ENCODE measurements at regions of chr16 and their contacts with region 1.

Region 1: GRCh38 chr16:70589998-70590471 is 56.3 kb upstream of the IL34 start:
- DNase-seq: peak; percentile 19
- H3K4me3 ChIP-seq: no peak overlapping the region
- H3K27ac ChIP-seq: no peak overlapping the region
- H3K4me1 ChIP-seq: peaks cover 9% of the 10 kb centered on the region
- H3K27me3 ChIP-seq: no peaks in the 10 kb centered on the region
- CTCF ChIP-seq: no peak
- POLR2A ChIP-seq: no peak

Region 2: GRCh38 chr16:70601576-70602575 is 11.8 kb after region 1 on chr16:
- CTCF ChIA-PET with region 1: interaction called, 10 read pairs
- POLR2A ChIA-PET with region 1: no interaction called
- dilution Hi-C with region 1: no loop called
- intact Hi-C with region 1: no loop called
- DNase-seq: no peak
- H3K4me3 ChIP-seq: no peak overlapping the region
- H3K27ac ChIP-seq: no peak overlapping the region
- H3K4me1 ChIP-seq: no peaks in the 10 kb centered on the region
- H3K27me3 ChIP-seq: no peaks in the 10 kb centered on the region
- CTCF ChIP-seq: no peak
- POLR2A ChIP-seq: no peak

Region 3: DNA sequence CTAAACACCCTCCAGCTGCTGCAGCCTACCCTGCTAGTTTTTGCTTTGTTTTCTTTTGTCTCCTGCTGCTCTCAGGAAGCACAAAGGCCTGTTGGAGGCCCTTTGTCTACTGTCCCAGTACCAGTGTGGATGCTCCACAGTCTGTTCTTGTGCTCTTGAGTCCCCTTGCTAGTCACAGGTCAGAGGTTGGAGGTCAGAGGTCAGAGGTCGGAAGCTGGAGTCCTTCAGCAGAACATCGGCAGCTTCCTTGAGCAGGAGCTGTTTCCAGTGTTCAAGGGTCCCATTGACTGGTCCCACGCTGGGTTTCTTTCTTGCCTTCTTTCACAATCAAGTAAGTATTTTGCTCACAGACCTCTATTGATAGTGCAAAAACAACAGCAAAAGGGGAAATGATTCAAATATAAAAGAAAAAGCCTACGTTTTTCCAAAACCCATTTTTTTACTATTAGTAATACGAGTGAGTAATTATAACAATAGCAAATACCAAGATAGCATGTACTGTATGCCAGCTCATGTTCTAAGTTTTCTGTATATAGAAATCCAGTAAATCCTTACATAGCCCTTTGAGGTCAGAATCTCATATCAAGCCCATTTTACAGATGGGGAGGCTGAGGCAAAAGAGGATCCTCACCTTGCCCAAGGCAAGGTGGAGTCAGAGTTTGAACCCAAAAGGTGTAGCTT is 45.4 kb after region 1 on chr16:
- CTCF ChIA-PET with region 1: interaction called, 4 read pairs
- POLR2A ChIA-PET with region 1: no interaction called
- dilution Hi-C with region 1: no loop called
- intact Hi-C with region 1: loop called (anchors 1 kb)
- DNase-seq: peak; percentile 91
- H3K4me3 ChIP-seq: peak overlapping the region in 1 of 3 experiments; percentile 1
- H3K27ac ChIP-seq: peak overlapping the region; percentile 93
- H3K4me1 ChIP-seq: peaks cover 19% of the 10 kb centered on the region
- H3K27me3 ChIP-seq: no peaks in the 10 kb centered on the region
- CTCF ChIP-seq: no peak
- POLR2A ChIP-seq: no peak

Region 4: DNA sequence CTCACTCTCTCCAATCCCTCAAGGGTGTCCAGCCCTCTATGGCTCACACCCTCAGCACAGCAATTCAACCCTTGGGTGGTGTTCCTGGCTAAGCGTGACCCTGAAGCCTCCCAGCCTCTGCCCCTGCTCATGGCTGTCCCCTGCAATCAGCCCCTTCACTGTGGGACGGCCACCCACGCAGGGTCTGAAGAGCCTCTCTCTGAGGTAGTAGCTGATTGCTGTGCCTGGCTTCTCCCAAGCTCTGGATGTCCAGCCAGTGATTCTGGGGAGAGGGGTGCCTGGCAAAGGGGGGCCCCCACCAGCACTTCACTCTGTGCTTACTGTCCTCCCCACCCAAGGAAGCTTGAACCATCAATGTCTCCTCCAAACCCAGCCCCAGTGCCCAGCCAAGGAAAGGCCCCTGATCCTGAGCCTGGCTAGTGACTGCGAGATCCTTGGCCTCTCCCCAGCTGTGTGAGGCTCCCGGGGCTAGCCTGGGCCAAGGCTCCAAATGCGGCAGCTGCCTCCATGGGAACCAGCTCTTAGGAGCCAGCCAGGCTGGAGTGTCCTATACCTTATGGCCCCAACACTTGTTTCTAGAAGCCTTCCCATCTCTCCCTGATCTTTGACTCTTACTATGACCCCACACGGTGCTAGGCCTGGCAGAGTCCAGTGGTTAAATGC is 85.9 kb after region 1 on chr16:
- CTCF ChIA-PET with region 1: no interaction called
- POLR2A ChIA-PET with region 1: no interaction called
- dilution Hi-C with region 1: no loop called
- intact Hi-C with region 1: no loop called
- DNase-seq: no peak
- H3K4me3 ChIP-seq: no peak overlapping the region
- H3K27ac ChIP-seq: no peak overlapping the region
- H3K4me1 ChIP-seq: no peaks in the 10 kb centered on the region
- H3K27me3 ChIP-seq: no peaks in the 10 kb centered on the region
- CTCF ChIP-seq: no peak
- POLR2A ChIP-seq: no peak